Adrenal gland (tissue), 19 donors: ENCODE measurements at regions of chr2 and their contacts with region 1.

Region 1: DNA sequence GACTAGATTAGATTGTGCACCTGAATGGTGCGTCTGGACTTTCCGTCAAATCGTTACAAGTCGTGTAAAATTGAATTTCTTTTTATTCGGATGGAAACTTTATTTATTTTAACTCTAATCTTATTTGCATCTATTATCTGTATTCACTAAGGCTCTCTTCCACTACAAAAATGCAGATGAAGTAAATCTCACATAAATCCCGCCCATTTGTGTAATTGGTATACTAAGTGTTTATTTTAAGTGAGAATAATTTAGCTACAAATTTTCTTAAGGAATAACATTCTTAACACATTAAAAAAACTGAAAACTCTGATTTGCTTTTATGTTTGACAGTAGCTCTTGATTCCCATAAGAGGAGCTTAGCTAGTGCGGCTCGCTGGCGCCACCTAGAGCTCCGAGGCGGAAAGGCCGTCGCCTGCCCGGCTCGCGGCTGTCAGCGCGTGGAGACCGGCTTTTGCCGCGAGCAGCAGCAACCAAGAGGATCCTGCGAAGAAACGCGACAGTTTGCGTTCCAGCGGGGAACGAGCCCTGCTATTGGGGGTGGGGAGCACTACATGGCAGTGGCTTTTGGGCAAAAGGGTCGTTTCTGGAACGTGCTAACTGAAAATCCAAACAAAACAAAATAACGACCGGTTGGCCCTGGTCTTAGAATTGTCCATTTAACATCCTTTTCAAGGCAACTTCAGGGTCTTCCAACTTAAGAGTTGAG is 6.7 kb downstream of the SP9 start:
- DNase-seq: peak; percentile 74 to 95 (median 87)
- H3K4me3 ChIP-seq: no peak overlapping the region
- H3K27ac ChIP-seq: no peak overlapping the region
- H3K4me1 ChIP-seq: peaks cover 6 to 35% of the 10 kb centered on the region in 2 donors
- H3K27me3 ChIP-seq: peaks cover 86% of the 10 kb centered on the region
- CTCF ChIP-seq: peak; percentile 88 to 99 (median 93)
- POLR2A ChIP-seq: no peak

Region 2: DNA sequence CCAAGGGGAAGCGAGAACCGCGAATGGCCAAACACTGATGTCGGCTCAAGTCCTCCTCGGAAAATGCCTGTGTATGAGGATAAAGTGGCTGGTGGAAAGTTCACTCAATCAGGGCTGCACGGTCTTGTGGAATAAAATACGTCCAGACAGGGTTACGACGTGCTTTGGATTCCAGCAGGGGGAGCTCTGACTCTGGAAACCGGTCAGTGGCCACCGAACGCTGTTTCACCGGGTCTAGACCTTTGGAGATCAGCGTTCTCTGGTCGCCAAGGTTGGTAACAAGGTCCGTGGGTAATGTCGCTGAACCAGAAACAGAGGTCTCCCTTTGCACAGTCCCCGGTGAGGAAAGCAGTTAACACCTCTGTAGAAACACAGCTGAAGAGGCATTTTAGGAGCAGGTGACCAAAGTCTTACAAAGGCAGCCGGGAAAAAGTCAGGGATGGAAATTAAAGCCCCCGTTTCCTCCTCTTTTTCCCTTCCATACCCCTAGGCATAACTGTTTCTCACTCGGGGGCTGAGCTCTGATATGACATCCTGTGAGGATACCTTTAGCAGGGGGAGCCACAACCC is 939.0 kb before region 1 on chr2:
- intact Hi-C with region 1: loop called (anchors 5 to 10 kb)
- DNase-seq: peak; percentile 76 to 90 (median 82)
- H3K4me3 ChIP-seq: no peak overlapping the region
- H3K27ac ChIP-seq: no peak overlapping the region
- H3K4me1 ChIP-seq: peaks cover 0 to 7% of the 10 kb centered on the region in 2 donors
- H3K27me3 ChIP-seq: peaks cover 39% of the 10 kb centered on the region
- CTCF ChIP-seq: peak; percentile 78 to 91 (median 82)
- POLR2A ChIP-seq: no peak

Region 3: GRCh38 chr2:173884025-173884802 is 457.2 kb before region 1 on chr2:
- intact Hi-C with region 1: loop called (anchors 5 to 10 kb)
- DNase-seq: peak; percentile 38 to 87 (median 73)
- H3K4me3 ChIP-seq: no peak overlapping the region
- H3K27ac ChIP-seq: no peak overlapping the region
- H3K4me1 ChIP-seq: no peaks in the 10 kb centered on the region
- H3K27me3 ChIP-seq: no peaks in the 10 kb centered on the region
- CTCF ChIP-seq: peak; percentile 44 to 66 (median 62)
- POLR2A ChIP-seq: no peak

Region 4: GRCh38 chr2:174158003-174158402 is 183.4 kb before region 1 on chr2:
- intact Hi-C with region 1: loop called in 1 of 2 experiments (anchors 10 kb)
- DNase-seq: peak in 5 of 7 donors; percentile 21 to 69 (median 51)
- H3K4me3 ChIP-seq: no peak overlapping the region
- H3K27ac ChIP-seq: no peak overlapping the region
- H3K4me1 ChIP-seq: peaks cover 0 to 18% of the 10 kb centered on the region in 2 donors
- H3K27me3 ChIP-seq: no peaks in the 10 kb centered on the region
- CTCF ChIP-seq: peak; percentile 26 to 54 (median 43)
- POLR2A ChIP-seq: no peak

Region 5: GRCh38 chr2:174568425-174568824 is 227.0 kb after region 1 on chr2:
- intact Hi-C with region 1: no loop called
- DNase-seq: no peak
- H3K4me3 ChIP-seq: no peak overlapping the region
- H3K27ac ChIP-seq: no peak overlapping the region
- H3K4me1 ChIP-seq: no peaks in the 10 kb centered on the region
- H3K27me3 ChIP-seq: no peaks in the 10 kb centered on the region
- CTCF ChIP-seq: no peak
- POLR2A ChIP-seq: no peak

Region 6: DNA sequence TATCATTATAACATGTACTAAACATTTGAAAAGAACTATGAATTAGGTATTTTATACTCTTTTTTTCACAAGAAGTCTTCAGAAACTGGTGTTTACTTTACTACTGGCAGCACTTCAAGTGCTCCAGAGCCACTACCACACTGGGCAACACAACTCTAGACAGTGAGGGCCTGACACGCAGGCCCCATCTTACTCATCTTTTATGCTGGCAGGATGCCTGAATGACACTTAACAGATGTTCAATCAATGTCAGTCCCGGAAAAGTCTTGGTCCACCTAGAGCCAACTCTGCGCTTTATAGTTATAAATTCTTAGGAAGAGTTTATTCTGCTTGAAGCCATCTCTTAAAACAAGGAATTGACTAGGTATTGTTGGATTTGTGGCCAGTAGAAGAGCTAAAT is 264.9 kb after region 1 on chr2:
- intact Hi-C with region 1: no loop called
- DNase-seq: peak in 6 of 7 donors; percentile 42 to 72 (median 59)
- H3K4me3 ChIP-seq: no peak overlapping the region
- H3K27ac ChIP-seq: no peak overlapping the region
- H3K4me1 ChIP-seq: peaks cover 0 to 15% of the 10 kb centered on the region in 2 donors
- H3K27me3 ChIP-seq: no peaks in the 10 kb centered on the region
- CTCF ChIP-seq: no peak
- POLR2A ChIP-seq: no peak